ENCODE measurements at regions of chr11 and their contacts with region 1.

Region 1: DNA sequence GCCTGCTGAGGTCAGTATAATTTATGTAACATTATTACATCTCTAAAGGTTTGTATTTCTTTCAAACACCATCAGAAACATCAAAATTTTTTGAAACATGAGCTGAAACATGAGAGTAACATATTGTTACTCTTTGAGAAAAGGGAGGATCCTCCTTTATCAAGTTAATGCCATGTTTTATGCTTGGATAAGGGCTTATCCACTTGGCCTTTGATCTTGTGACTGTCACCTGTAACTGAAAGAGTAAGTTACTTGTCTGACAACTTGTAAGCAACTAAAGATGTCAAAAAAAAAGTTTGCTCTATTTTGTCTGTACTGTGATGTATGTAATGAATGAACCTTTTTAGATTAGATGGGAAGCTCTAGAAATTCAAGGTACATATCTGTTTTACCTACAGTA is 59.6 kb downstream of the FAR1 start:
- DNase-seq: no peak
- ATAC-seq: no peak
- H3K4me3 ChIP-seq: no peak overlapping the region
- H3K27ac ChIP-seq: no peak overlapping the region
- H3K4me1 ChIP-seq: no peaks in the 10 kb centered on the region
- H3K27me3 ChIP-seq: no peaks in the 10 kb centered on the region
- CTCF ChIP-seq: no peak
- POLR2A ChIP-seq: no peak

Region 2: DNA sequence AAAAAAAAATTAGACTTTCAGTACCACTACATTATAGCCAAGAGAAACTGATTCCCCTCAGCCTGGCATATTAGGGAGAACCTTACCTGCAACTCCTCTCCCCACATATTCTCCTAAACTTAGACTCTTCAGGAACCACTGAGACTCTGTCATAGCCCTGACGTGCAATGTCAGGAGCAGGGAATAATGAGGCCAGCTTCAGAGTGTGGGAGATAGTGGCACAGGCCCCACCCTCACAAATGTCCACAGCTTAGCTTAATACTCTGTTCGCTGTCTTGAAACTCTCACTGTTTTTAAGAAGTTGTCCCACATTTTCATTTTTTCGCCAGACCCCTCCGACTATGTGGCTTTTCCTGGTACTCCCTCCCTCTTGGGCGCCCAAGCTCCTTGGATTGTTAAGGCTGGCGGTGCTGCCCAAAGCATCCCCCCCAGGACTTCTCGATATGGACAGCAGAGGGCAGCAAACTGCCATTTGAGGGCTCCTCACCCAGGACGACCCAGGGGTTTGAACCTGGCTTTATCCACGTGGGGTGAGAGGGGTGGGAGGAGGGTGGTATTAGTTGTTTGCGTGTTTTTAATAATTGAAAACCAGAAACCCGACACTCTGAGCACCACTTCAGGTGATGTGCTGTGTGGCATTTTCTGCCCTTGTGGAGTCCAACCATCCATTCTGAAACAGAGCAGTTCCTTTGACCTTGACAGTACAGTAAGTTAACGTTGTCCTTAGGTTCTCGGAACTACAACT is 764.1 kb before region 1 on chr11:
- intact Hi-C with region 1: no loop called
- DNase-seq: peak; percentile 50 to 69 (median 57)
- ATAC-seq: peak; percentile 60 to 93 (median 91)
- H3K4me3 ChIP-seq: no peak overlapping the region
- H3K27ac ChIP-seq: no peak overlapping the region
- H3K4me1 ChIP-seq: peaks cover 0 to 5% (median 0%) of the 10 kb centered on the region in 12 donors
- H3K27me3 ChIP-seq: no peaks in the 10 kb centered on the region
- CTCF ChIP-seq: peak; percentile 72 to 94 (median 86)
- POLR2A ChIP-seq: no peak

Region 3: DNA sequence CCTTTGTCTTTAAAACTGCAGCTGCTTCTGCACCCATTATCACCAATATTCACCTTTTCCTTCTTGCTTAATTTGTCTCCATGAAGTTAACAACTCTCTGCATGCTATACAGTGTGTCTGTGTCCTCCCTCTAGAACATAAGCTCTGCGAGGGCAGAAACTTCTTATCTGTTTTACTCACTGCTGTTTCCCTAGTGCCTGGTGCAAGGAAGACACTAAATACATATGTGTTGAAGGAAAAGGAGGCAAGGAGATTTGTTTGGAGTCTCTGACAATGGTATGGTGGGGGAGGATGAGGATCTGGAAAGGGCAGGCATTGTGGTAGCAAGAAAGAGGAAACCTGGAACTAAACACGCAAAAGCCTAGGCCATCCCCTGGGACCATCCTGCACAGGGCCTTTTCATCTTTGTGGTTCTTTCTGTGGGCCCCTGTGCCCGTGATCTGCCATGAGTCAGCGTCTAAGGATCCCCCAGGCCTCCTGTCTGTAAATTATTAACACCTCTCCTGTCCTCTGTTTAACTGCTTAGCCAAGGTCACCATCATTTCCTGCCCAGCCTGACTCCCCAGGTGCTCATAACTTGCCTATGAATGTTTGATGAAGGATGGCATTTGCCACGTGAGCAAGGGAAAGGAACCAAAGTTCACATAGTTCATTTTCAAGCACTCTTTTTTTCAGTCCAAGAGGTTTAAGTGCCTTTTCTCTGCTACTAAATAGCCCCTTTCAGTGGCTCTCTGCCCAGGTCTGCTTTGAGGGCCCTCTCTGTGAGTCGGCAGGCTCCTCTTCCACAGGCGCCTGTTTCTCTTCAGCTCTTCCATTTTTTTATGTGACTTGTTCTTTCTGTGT is 587.8 kb before region 1 on chr11:
- intact Hi-C with region 1: no loop called
- DNase-seq: no peak
- ATAC-seq: no peak
- H3K4me3 ChIP-seq: no peak overlapping the region
- H3K27ac ChIP-seq: no peak overlapping the region
- H3K4me1 ChIP-seq: peaks cover 0 to 11% (median 0%) of the 10 kb centered on the region in 12 donors
- H3K27me3 ChIP-seq: peaks cover 0 to 4% (median 0%) of the 10 kb centered on the region in 9 donors
- CTCF ChIP-seq: no peak
- POLR2A ChIP-seq: no peak

Region 4: GRCh38 chr11:13705710-13706109 is 22.4 kb before region 1 on chr11:
- intact Hi-C with region 1: loop called in 1 of 10 experiments (anchors 1 kb)
- DNase-seq: no peak
- ATAC-seq: no peak
- H3K4me3 ChIP-seq: no peak overlapping the region
- H3K27ac ChIP-seq: no peak overlapping the region
- H3K4me1 ChIP-seq: peaks cover 0 to 3% (median 0%) of the 10 kb centered on the region in 12 donors
- H3K27me3 ChIP-seq: no peaks in the 10 kb centered on the region
- CTCF ChIP-seq: no peak
- POLR2A ChIP-seq: no peak

Measured in heart left ventricle (tissue), 16 donors.